ENCODE measurements at regions of chr12 and their contacts with region 1.

Region 1: GRCh38 chr12:38138225-38139221 is 178.1 kb upstream of the ALG10B start:
- DNase-seq: peak; percentile 76
- CTCF ChIP-seq: peak; percentile 85

Region 2: GRCh38 chr12:38316391-38317129 is 178.0 kb after region 1 on chr12 and contains the start of gene ALG10B:
- in situ Hi-C with region 1: loop called (anchors 25 kb)
- DNase-seq: peak; percentile 77
- CTCF ChIP-seq: peak; percentile 60

Region 3: GRCh38 chr12:38342444-38342843 is 203.9 kb after region 1 on chr12:
- in situ Hi-C with region 1: no loop called
- DNase-seq: no peak
- CTCF ChIP-seq: no peak

Region 4: DNA sequence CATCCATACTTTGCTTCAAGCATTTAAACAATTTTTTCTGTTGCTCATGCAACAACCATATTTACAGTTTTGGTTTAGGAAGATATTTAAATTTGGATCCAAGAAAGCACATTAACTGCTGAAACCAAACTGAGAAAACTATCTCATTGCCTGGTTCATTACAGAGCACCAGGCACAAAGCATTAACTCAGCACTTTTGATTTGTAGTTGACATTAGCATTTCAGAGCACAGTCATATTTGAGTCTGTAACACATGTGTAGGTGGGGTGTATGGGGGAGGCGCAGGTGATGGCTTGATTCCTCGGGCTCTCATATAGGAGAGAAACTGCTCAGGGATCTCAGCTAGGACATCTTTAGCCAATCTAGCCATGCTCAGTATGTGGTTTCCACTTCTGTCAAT is 515.1 kb after region 1 on chr12:
- in situ Hi-C with region 1: no loop called
- DNase-seq: no peak
- CTCF ChIP-seq: no peak

Region 5: DNA sequence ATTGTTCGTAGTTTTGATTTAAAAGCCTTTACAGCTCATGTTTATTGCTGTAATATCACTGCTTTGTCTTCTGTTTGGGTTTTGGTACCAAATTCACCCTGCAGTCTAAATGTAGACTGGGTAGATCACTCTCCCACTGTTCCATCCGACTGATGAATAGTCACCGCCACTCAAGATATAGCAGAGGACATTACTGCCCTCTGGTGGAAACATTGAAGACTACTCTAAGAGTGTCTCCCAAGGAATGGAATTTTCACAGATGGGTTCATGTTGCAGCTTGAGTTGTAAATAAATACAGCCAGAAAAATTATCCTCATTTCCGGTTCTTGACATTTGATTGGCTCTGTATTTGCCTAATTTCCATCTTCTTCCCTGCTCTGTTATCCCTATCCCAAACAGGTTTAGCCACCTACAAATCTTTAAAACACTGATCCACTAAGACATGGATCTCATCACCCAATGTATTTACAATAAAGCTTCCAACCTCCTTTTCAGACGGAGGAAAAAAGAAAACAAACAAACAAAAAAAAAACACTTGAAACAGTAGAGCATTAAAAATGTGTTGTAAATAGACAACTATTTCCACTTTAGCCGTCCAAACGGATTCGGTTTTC is 965.1 kb after region 1 on chr12:
- in situ Hi-C with region 1: loop called (anchors 25 kb)
- DNase-seq: peak; percentile 70
- CTCF ChIP-seq: peak; percentile 71

Region 6: DNA sequence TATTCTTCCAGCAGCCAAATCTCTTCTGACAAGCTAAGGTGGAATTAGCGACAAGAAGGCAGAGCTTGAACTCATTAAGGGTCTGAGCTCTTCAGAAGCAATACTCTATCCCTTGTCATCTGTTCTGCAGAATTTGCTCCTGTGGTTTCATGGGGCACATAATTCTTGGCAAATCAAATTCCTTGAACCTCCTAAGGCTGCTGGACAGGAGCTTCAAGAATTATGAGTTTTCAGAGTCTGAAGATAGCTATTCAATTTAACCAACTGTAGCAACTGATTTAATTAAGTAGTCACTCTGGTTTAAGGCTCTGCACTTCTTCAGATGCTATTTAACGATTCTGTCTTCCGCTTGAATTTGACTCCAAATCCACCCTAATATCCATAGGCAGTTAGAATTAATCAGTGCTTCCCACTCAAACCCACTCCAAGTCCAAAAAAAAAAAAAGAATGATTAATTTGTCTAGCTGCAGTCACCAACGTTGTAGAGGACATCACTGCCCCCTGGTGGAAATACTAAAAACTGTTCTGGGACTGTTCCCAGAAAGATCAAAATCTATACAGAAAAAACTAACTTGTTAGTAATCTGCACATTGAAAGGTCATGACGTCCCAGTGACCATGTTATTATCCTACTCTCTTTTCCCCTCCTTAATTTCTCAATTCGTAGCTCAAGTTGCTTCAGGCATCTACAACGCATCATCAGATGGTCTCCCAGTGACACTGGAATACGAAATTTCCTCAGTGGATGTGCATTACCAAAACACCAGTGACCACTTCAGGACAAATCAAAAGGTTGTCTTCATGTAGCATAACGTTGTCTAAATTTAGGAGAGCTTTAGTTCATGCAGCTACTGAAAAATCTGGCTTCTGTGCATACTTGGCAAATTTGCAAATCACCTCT is 1134.6 kb after region 1 on chr12:
- in situ Hi-C with region 1: loop called (anchors 25 kb)
- DNase-seq: no peak
- CTCF ChIP-seq: peak; percentile 59

Measured in GM13976 (cell line).